Calu3 (cell line): ENCODE measurements at regions of chr22 and their contacts with region 1.

Region 1: GRCh38 chr22:37019309-37020125 is at the starts of genes MPST and TST:
- DNase-seq: peak; percentile 75
- H3K4me3 Mint-ChIP-seq: peak within 1 kb of the TSS; percentile 95
- H3K27ac Mint-ChIP-seq: peak within 1 kb of the TSS; percentile 74
- H3K4me1 Mint-ChIP-seq: peaks cover 43% of the 10 kb centered on the region
- H3K27me3 Mint-ChIP-seq: no peaks in the 10 kb centered on the region
- CTCF ChIP-seq: peak; percentile 30
- total RNA-seq, gene MPST: 60.8 and 73.0 TPM in 2 replicates
- total RNA-seq, gene TST: 52.2 and 64.7 TPM in 2 replicates

Region 2: GRCh38 chr22:37043828-37044538 is 24.5 kb after region 1 on chr22:
- CTCF ChIA-PET with region 1: interaction called, 11 read pairs
- intact Hi-C with region 1: no loop called
- DNase-seq: peak; percentile 90
- H3K4me3 Mint-ChIP-seq: peak overlapping the region; percentile 39
- H3K27ac Mint-ChIP-seq: peak overlapping the region; percentile 74
- H3K4me1 Mint-ChIP-seq: peaks cover 44% of the 10 kb centered on the region
- H3K27me3 Mint-ChIP-seq: no peaks in the 10 kb centered on the region
- CTCF ChIP-seq: peak; percentile 87

Region 3: GRCh38 chr22:37218771-37219411 is 199.4 kb after region 1 on chr22:
- CTCF ChIA-PET with region 1: no interaction called
- intact Hi-C with region 1: no loop called
- DNase-seq: no peak
- H3K4me3 Mint-ChIP-seq: no peak overlapping the region
- H3K27ac Mint-ChIP-seq: no peak overlapping the region
- H3K4me1 Mint-ChIP-seq: peaks cover 5% of the 10 kb centered on the region
- H3K27me3 Mint-ChIP-seq: peaks cover 73% of the 10 kb centered on the region
- CTCF ChIP-seq: no peak